ENCODE measurements at regions of chr14 and their contacts with region 1.

Region 1: GRCh38 chr14:64986578-64987571 is at the start of gene FNTB:
- DNase-seq: peak; percentile 94
- ATAC-seq: peak; percentile 99
- H3K4me3 ChIP-seq: peak within 1 kb of the TSS; percentile 93
- H3K27ac ChIP-seq: peak within 1 kb of the TSS; percentile 80
- H3K4me1 ChIP-seq: peaks cover 26% of the 10 kb centered on the region
- H3K27me3 ChIP-seq: no peaks in the 10 kb centered on the region
- CTCF ChIP-seq: peak; percentile 78 to 99 (median 97); a peak in 5 of 6 replicates
- EP300 ChIP-seq: no peak
- POLR2A ChIP-seq: peak; percentile 82
- RAD21 ChIP-seq: peak; percentile 94
- polyA plus RNA-seq, gene FNTB: 10.4 to 14.2 TPM

Region 2: DNA sequence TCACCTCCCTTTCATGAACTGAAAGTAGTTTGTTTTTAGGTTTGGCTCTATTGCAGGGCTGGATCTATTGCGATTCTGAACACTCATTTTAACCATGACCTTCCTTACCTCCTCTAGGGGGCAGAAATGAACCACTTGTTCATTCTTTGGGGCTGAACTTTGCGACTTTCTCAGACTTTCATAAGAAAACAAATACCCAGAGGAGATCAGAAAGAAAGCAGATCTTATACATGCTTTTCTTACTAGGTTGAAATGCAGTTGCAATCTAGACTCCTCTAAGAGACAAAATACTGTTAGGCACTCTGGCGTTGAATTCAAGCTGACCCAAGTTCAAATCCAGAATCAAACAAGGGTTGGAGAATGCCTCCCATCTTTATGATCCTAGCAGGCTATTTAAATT is 315.3 kb before region 1 on chr14:
- CTCF ChIA-PET with region 1: interaction called, 4 read pairs
- POLR2A ChIA-PET with region 1: no interaction called
- RAD21 ChIA-PET with region 1: no interaction called
- SMC1A ChIA-PET with region 1: no interaction called
- in situ Hi-C with region 1: no loop called
- intact Hi-C with region 1: loop called (anchors 10 kb)
- DNase-seq: no peak
- ATAC-seq: peak; percentile 54
- H3K4me3 ChIP-seq: no peak overlapping the region
- H3K27ac ChIP-seq: no peak overlapping the region
- H3K4me1 ChIP-seq: peaks cover 6% of the 10 kb centered on the region
- H3K27me3 ChIP-seq: no peaks in the 10 kb centered on the region
- CTCF ChIP-seq: peak; percentile 63 to 66 (median 66)
- EP300 ChIP-seq: no peak
- POLR2A ChIP-seq: no peak
- RAD21 ChIP-seq: peak; percentile 70

Region 3: GRCh38 chr14:64823305-64823861 is 163.5 kb before region 1 on chr14:
- CTCF ChIA-PET with region 1: interaction called, 13 read pairs
- POLR2A ChIA-PET with region 1: no interaction called
- RAD21 ChIA-PET with region 1: interaction called, 7 read pairs
- SMC1A ChIA-PET with region 1: interaction called, 11 read pairs
- in situ Hi-C with region 1: loop called (anchors 5 kb)
- intact Hi-C with region 1: loop called (anchors 1 kb)
- DNase-seq: no peak
- ATAC-seq: peak; percentile 98
- H3K4me3 ChIP-seq: no peak overlapping the region
- H3K27ac ChIP-seq: no peak overlapping the region
- H3K4me1 ChIP-seq: no peaks in the 10 kb centered on the region
- H3K27me3 ChIP-seq: peaks cover 0 to 3% of the 10 kb centered on the region in 2 experiments; a peak in 2 of 4 replicates
- CTCF ChIP-seq: peak; percentile 69 to 83 (median 81)
- EP300 ChIP-seq: no peak
- POLR2A ChIP-seq: no peak
- RAD21 ChIP-seq: peak; percentile 61

Region 4: DNA sequence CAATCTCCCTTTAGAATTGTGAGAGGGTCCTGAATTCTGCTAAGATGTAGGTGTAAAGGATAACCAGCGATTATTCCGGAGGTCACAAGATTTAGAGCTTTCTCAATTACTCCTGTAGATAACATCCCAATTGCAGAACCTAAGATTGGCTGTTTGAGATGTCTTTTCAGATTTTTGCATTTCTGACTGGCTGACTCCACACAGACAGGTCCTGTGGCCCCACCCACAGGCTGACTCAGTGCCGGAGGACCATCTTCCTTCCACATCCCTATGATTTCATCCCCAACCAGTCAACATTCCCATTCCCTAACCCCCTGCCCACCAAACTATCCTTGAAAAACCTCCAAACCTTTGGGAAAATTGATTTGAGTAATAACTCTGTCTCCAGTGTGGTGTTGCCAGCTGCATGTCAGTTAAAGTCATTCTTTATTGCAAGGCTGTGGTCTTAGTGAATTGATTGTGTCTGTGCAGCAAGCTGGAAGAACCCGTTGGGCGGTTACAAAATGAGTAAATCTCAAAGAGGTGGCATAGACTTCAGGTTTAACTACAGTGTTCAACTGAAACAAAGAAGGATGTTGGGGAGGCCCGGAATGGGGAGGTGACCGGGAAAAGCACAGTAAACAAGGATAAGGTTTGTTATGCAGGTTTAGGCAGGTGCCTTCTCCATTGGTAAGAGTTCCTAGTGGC is 10.4 kb after region 1 on chr14:
- CTCF ChIA-PET with region 1: interaction called, 67 read pairs
- POLR2A ChIA-PET with region 1: interaction called, 7 read pairs
- RAD21 ChIA-PET with region 1: interaction called, 6 read pairs
- SMC1A ChIA-PET with region 1: interaction called, 55 read pairs
- in situ Hi-C with region 1: no loop called
- intact Hi-C with region 1: no loop called
- DNase-seq: no peak
- ATAC-seq: peak; percentile 72
- H3K4me3 ChIP-seq: peak overlapping the region; percentile 47
- H3K27ac ChIP-seq: peak overlapping the region; percentile 74
- H3K4me1 ChIP-seq: peaks cover 29% of the 10 kb centered on the region
- H3K27me3 ChIP-seq: no peaks in the 10 kb centered on the region
- CTCF ChIP-seq: no peak
- EP300 ChIP-seq: no peak
- POLR2A ChIP-seq: no peak
- RAD21 ChIP-seq: no peak

Region 5: DNA sequence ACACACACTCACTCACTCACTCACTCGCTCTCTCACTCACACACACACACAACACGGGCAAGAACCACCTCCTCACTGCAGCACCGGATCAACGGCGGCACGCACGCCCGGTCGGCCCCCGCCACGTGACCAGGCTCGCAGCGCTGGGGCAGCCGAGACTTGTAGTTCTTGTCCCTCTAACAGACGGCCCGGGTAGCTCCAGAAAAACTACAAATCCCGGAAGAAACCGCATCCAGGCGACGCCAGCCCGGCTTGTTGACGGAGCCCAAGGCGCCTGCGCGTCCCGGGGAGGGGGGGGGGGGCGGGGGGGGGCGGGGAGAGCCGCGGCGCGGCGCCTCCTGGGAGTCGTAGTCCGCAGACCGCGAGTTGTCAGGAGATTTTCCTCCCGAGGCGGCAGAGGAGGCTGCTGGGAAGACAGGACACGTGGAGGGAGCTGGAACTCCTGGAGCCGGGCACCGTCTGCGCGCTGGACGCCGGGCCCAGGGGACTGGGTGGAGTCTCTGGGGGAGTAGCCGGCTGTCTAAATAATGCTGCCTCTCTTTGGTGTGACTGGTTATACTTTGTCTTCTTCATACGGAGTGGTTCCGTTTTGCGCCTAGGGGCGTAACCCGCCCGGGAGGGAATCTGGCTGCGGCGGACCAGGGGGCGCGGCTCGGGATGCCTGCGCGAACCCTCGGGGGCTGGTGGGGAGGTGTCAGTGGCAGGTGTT is 115.7 kb after region 1 on chr14 and contains the start of gene MAX:
- CTCF ChIA-PET with region 1: interaction called, 11 read pairs
- POLR2A ChIA-PET with region 1: interaction called, 4 read pairs
- RAD21 ChIA-PET with region 1: interaction called, 11 read pairs
- SMC1A ChIA-PET with region 1: interaction called, 4 read pairs
- in situ Hi-C with region 1: no loop called
- intact Hi-C with region 1: loop called (anchors 5 kb)
- DNase-seq: peak; percentile 90
- ATAC-seq: peak; percentile 97
- H3K4me3 ChIP-seq: peak within 1 kb of the TSS; percentile 96
- H3K27ac ChIP-seq: peak within 1 kb of the TSS; percentile 82
- H3K4me1 ChIP-seq: peaks cover 9% of the 10 kb centered on the region
- H3K27me3 ChIP-seq: no peaks in the 10 kb centered on the region
- CTCF ChIP-seq: no peak
- EP300 ChIP-seq: no peak
- POLR2A ChIP-seq: peak; percentile 89
- RAD21 ChIP-seq: no peak
- polyA plus RNA-seq, gene MAX: 21.5 to 37.2 TPM

Region 6: DNA sequence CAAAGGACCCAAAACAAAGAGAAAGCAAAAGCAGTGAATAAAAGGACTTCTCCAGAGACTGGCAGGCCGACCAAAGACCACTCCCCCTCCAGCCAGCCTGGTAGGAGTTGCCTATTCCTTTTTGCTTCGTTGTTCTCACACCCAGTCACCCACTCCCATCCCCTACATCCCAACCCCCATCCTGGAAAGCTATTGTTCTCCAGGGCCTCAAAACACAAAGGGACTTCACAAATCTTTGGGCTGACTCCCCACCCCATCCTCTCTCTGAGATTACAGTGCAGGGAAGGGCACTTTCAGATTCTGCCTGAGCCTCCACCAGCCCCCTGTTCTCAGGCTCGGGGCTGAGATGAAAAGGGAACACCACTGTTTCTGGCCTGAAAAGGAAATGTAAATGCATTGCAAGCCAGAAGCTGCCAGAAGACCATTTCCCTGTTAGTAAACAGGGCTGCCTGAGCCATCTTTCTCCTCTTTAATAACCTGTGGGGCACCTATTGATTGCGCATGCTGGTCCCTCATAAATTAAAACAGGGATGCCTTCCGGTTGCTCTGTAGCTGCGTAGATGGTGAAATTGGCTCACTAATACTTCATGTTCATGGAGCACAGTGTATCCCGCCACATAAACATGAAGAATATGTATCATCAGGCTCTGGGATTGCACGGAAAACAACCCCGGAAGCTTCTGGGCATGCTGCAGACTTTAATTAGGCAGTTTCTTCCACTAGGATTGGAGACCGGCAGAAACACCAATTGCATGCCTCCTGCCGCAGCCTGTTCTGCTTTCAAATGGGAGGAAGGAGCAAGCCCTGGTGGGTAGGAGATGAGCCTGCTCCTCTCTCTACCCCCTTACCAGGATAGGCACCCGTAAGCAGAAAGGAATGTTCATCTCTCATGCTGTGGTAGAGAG is 295.4 kb after region 1 on chr14:
- CTCF ChIA-PET with region 1: no interaction called
- POLR2A ChIA-PET with region 1: no interaction called
- RAD21 ChIA-PET with region 1: interaction called, 3 read pairs
- SMC1A ChIA-PET with region 1: no interaction called
- in situ Hi-C with region 1: no loop called
- intact Hi-C with region 1: loop called (anchors 10 kb)
- DNase-seq: no peak
- ATAC-seq: peak; percentile 55
- H3K4me3 ChIP-seq: peak overlapping the region; percentile 66
- H3K27ac ChIP-seq: peak overlapping the region; percentile 89
- H3K4me1 ChIP-seq: peaks cover 43% of the 10 kb centered on the region
- H3K27me3 ChIP-seq: no peaks in the 10 kb centered on the region
- CTCF ChIP-seq: no peak
- EP300 ChIP-seq: no peak
- POLR2A ChIP-seq: 0 out of 2 replicates have a peak, but pooled peaks have one; percentile 8
- RAD21 ChIP-seq: no peak

Region 7: DNA sequence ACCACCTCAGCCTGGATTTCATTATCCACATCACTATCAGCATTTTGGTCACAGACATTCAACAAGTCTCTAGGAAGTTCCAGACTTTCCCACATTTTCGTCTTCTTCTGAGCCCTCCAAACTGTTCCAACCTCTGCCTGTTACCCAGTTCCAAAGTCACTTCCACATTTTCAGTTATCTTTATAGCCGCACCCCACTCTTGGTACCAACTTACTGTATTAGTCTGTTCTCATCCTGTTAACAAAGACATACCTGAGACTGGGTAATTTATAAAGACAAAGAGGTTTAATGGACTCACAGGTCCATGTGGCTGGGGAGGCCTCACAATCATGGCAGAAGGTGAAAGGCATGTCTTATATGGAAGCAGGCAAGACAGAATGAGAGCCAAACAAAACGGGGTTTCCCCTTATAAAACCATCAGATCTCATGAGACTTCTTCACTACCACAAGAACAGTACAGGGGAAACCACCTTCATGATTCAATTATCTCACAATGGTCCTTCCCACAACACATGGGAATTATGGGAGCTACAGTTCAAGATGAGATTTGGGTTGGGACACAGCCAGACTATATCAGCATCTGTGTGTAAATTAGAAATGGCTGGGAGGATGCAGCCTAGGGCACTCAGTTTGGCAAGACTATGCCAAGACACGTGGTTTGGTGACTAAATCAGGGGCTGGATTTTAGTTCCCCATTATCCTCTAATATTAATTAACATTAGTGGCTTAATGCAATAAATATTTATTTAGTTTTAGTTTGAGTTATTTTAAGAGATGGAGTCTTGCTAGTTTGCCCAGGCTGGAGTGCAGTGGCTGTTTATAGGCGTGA is 409.4 kb after region 1 on chr14:
- CTCF ChIA-PET with region 1: no interaction called
- POLR2A ChIA-PET with region 1: no interaction called
- RAD21 ChIA-PET with region 1: no interaction called
- SMC1A ChIA-PET with region 1: no interaction called
- in situ Hi-C with region 1: no loop called
- intact Hi-C with region 1: no loop called
- DNase-seq: no peak
- ATAC-seq: peak; percentile 24; the same call in 1 of the 3 replicates
- H3K4me3 ChIP-seq: no peak overlapping the region
- H3K27ac ChIP-seq: no peak overlapping the region
- H3K4me1 ChIP-seq: no peaks in the 10 kb centered on the region
- H3K27me3 ChIP-seq: no peaks in the 10 kb centered on the region
- CTCF ChIP-seq: no peak
- EP300 ChIP-seq: no peak
- POLR2A ChIP-seq: no peak
- RAD21 ChIP-seq: no peak